Transverse colon (tissue), 4 donors: ENCODE measurements at regions of chr12 and their contacts with region 1.

Region 1: DNA sequence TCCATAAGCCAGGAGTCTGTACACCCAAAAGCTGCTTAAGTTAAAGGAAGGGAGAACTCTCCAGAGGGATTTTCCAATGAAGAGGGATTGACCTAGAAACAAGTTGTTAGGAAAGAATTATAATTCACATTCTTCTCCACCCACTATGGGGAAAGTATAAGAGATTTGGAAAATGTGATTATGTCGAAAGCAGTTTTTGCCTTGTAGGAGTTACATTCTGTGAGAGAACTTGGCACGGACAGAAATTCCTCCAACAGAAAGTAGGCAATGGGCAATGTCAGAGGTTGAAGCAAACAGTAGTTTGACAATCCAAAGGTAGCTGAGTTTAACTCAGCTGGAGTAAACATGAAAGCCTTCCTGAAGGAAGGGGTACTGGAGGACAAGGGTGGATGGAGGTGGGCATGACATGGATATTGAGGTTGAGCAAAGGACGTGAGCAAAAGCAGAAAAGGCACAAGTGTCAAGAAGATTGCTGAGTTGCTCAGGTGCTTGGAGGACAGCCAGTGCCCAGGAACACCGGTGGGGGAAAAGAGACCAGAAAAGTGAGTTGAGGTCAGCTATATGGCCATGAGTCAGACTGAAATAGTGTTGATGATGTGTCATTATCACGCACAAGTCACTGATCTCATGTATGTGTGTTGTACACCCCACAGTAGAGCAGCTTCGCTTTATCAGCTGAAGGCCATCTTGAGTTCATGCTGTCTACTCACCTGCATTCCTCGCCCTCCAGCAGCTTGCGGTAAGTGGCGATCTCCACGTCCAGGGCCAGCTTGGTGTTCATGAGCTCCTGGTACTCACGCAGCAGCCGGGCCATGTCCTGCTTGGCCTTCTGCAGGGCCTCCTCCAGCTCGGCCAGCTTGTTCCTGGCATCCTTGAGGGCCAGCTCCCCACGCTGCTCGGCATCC is 4.0 kb downstream of the KRT5 start:
- DNase-seq: no peak
- H3K4me3 ChIP-seq: no peak overlapping the region
- H3K27ac ChIP-seq: no peak overlapping the region
- H3K4me1 ChIP-seq: no peaks in the 10 kb centered on the region
- H3K27me3 ChIP-seq: no peaks in the 10 kb centered on the region
- CTCF ChIP-seq: no peak
- EP300 ChIP-seq: no peak
- POLR2A ChIP-seq: no peak

Region 2: GRCh38 chr12:52221912-52222457 is 294.2 kb before region 1 on chr12:
- in situ Hi-C with region 1: no loop called
- intact Hi-C with region 1: no loop called
- DNase-seq: peak; percentile 69
- H3K4me3 ChIP-seq: no peak overlapping the region
- H3K27ac ChIP-seq: no peak overlapping the region
- H3K4me1 ChIP-seq: peaks cover 0 to 11% (median 5%) of the 10 kb centered on the region in 4 donors
- H3K27me3 ChIP-seq: no peaks in the 10 kb centered on the region
- CTCF ChIP-seq: peak; percentile 20 to 50 (median 33)
- EP300 ChIP-seq: no peak
- POLR2A ChIP-seq: no peak

Region 3: DNA sequence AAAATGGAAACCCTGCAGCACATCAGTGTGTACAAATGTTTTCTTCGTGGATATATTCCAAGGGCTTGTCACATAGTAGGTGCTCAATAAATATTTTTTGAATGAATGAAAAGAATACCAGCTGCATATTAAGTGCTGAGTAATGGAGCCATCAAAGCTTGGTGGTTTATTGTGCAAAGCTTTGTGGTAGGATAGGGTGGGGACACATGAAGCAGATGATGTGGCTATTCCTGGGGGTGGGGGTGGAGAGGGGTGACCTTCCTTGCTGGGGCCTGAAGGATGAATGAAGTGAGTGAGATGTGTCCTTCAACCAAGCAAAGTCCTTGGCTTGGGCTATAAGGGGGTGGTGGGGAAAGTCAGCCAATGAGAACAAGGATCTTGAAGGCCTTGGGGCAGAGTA is 220.5 kb before region 1 on chr12:
- in situ Hi-C with region 1: no loop called
- intact Hi-C with region 1: no loop called
- DNase-seq: no peak
- H3K4me3 ChIP-seq: no peak overlapping the region
- H3K27ac ChIP-seq: no peak overlapping the region
- H3K4me1 ChIP-seq: no peaks in the 10 kb centered on the region
- H3K27me3 ChIP-seq: peaks cover 14% of the 10 kb centered on the region
- CTCF ChIP-seq: no peak
- EP300 ChIP-seq: no peak
- POLR2A ChIP-seq: no peak

Region 4: GRCh38 chr12:52372216-52373154 is 143.7 kb before region 1 on chr12:
- in situ Hi-C with region 1: no loop called
- intact Hi-C with region 1: loop called (anchors 10 kb)
- DNase-seq: peak; percentile 82
- H3K4me3 ChIP-seq: no peak overlapping the region
- H3K27ac ChIP-seq: peak overlapping the region in 3 of 4 donors; percentile 26 to 55 (median 42)
- H3K4me1 ChIP-seq: peaks cover 0 to 5% (median 0%) of the 10 kb centered on the region in 4 donors
- H3K27me3 ChIP-seq: no peaks in the 10 kb centered on the region
- CTCF ChIP-seq: peak; percentile 70 to 81 (median 75)
- EP300 ChIP-seq: no peak
- POLR2A ChIP-seq: no peak

Region 5: GRCh38 chr12:52568111-52568510 is 51.9 kb after region 1 on chr12:
- in situ Hi-C with region 1: no loop called
- intact Hi-C with region 1: no loop called
- DNase-seq: no peak
- H3K4me3 ChIP-seq: no peak overlapping the region
- H3K27ac ChIP-seq: no peak overlapping the region
- H3K4me1 ChIP-seq: no peaks in the 10 kb centered on the region
- H3K27me3 ChIP-seq: no peaks in the 10 kb centered on the region
- CTCF ChIP-seq: no peak
- EP300 ChIP-seq: no peak
- POLR2A ChIP-seq: no peak

Region 6: GRCh38 chr12:52650520-52651081 is 134.4 kb after region 1 on chr12:
- in situ Hi-C with region 1: no loop called
- intact Hi-C with region 1: no loop called
- DNase-seq: no peak
- H3K4me3 ChIP-seq: no peak overlapping the region
- H3K27ac ChIP-seq: peak overlapping the region in 1 of 4 donors; percentile 18
- H3K4me1 ChIP-seq: peaks cover 0 to 10% (median 3%) of the 10 kb centered on the region in 4 donors
- H3K27me3 ChIP-seq: peaks cover 14% of the 10 kb centered on the region
- CTCF ChIP-seq: no peak
- EP300 ChIP-seq: no peak
- POLR2A ChIP-seq: no peak